Heart left ventricle (tissue), 16 donors: ENCODE measurements at regions of chr3 and their contacts with region 1.

Region 1: GRCh38 chr3:49276475-49277382 is at the start of gene C3orf62:
- DNase-seq: peak; percentile 95 to 96 (median 96)
- ATAC-seq: peak; percentile 85 to 97 (median 96)
- H3K4me3 ChIP-seq: peak within 1 kb of the TSS; percentile 25 to 64 (median 53)
- H3K27ac ChIP-seq: peak within 1 kb of the TSS; percentile 89 to 99 (median 96)
- H3K4me1 ChIP-seq: peaks cover 0 to 43% (median 31%) of the 10 kb centered on the region in 12 donors
- H3K27me3 ChIP-seq: no peaks in the 10 kb centered on the region
- CTCF ChIP-seq: no peak
- POLR2A ChIP-seq: peak in 1 of 2 donors; percentile 26
- total RNA-seq, gene C3orf62: 1.3 to 5.6 (median 2.9) TPM

Region 2: DNA sequence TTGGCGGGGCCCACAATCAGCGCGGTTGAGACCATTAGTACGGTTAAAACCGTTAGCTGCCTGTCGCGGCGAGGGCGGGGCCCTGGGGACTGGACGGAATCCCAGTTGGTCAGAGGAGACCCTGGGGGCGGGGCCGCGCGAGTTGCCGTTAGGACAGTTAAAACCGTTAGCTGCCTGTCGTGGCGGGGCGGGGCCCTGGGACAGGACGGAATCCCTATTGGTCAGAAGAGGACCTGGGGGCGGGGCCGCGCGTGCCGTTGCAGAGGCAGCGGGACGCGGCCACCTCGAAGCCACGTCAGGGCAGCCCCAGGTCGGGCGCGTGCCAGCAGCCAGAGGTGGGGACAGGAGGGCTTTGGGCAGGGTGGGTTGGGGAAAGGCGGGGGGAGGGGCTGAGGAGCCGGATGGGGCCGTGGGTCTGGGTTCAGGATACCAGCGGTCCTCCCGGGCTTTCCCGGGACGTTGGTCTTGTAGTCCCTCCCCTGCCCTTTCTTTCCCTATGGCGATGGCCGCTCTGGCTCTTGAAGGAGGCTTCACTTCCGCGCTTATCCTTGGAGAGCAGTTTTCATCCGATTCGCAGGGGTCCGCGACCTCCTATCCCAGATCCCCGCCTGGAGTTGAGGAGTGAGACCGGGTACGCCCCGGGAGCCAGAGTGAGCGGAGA is 77.4 kb before region 1 on chr3:
- intact Hi-C with region 1: loop called in 1 of 10 experiments (anchors 2 kb)
- DNase-seq: peak; percentile 94 to 99 (median 96)
- ATAC-seq: peak; percentile 97 to 99 (median 99)
- H3K4me3 ChIP-seq: peak overlapping the region in 11 of 12 donors; percentile 20 to 81 (median 59)
- H3K27ac ChIP-seq: peak overlapping the region; percentile 44 to 92 (median 80)
- H3K4me1 ChIP-seq: peaks cover 0 to 24% (median 5%) of the 10 kb centered on the region in 12 donors
- H3K27me3 ChIP-seq: no peaks in the 10 kb centered on the region
- CTCF ChIP-seq: no peak
- POLR2A ChIP-seq: peak in 1 of 2 donors; percentile 43

Region 3: GRCh38 chr3:49217688-49218470 is 58.9 kb before region 1 on chr3:
- intact Hi-C with region 1: loop called in 2 of 10 experiments (anchors 5 kb)
- DNase-seq: peak in 4 of 5 donors; percentile 22 to 68 (median 49)
- ATAC-seq: peak; percentile 80 to 83 (median 81)
- H3K4me3 ChIP-seq: no peak overlapping the region
- H3K27ac ChIP-seq: peak overlapping the region; percentile 51 to 94 (median 84)
- H3K4me1 ChIP-seq: peaks cover 0 to 25% (median 16%) of the 10 kb centered on the region in 12 donors
- H3K27me3 ChIP-seq: no peaks in the 10 kb centered on the region
- CTCF ChIP-seq: no peak
- POLR2A ChIP-seq: no peak